Heart right ventricle (tissue), 16 donors: ENCODE measurements at regions of chr11 and their contacts with region 1.

Region 1: DNA sequence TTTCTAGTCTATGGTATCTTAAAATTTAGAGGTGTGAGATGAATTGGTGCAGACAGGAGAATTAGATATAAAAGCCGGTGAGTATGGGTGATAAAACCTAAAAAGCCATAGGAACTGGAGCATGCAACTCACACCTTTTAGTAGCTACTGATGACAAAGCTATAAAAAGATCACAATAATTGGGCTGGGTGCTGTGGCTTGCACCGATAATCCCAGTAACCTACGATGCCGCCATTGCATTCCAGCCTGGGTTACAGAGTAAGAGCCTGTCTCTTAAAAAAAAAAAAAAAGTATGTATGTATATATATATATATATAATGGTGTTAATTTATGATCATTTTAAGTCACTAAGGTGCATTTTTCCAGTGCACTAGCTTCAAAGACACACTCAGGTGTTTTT is 17.2 kb downstream of the WEE1 start:
- DNase-seq: no peak
- ATAC-seq: no peak
- H3K4me3 ChIP-seq: no peak overlapping the region
- H3K27ac ChIP-seq: no peak overlapping the region
- H3K4me1 ChIP-seq: no peaks in the 10 kb centered on the region
- H3K27me3 ChIP-seq: no peaks in the 10 kb centered on the region
- CTCF ChIP-seq: no peak

Region 2: GRCh38 chr11:9573052-9573774 is 17.5 kb before region 1 on chr11 and contains the start of gene WEE1:
- intact Hi-C with region 1: no loop called
- DNase-seq: peak; percentile 98 to 99
- ATAC-seq: peak; percentile 94 to 98 (median 96)
- H3K4me3 ChIP-seq: peak within 1 kb of the TSS; percentile 54 to 95 (median 82)
- H3K27ac ChIP-seq: peak within 1 kb of the TSS; percentile 86 to 98 (median 96)
- H3K4me1 ChIP-seq: peaks cover 3 to 57% (median 35%) of the 10 kb centered on the region in 9 donors
- H3K27me3 ChIP-seq: no peaks in the 10 kb centered on the region
- CTCF ChIP-seq: no peak
- total RNA-seq, gene WEE1: 22.9 to 114 (median 59.0) TPM

Region 3: GRCh38 chr11:9601876-9602199 is 11.1 kb after region 1 on chr11:
- intact Hi-C with region 1: loop called in 1 of 10 experiments (anchors 2 kb)
- DNase-seq: no peak
- ATAC-seq: peak in 2 of 8 donors; percentile 14 to 22
- H3K4me3 ChIP-seq: no peak overlapping the region
- H3K27ac ChIP-seq: peak overlapping the region in 2 of 10 donors; percentile 5 to 86
- H3K4me1 ChIP-seq: peaks cover 0 to 18% (median 7%) of the 10 kb centered on the region in 9 donors
- H3K27me3 ChIP-seq: no peaks in the 10 kb centered on the region
- CTCF ChIP-seq: no peak